ENCODE measurements at regions of chr1 and their contacts with region 1.

Region 1: GRCh38 chr1:47192458-47193384 is 2.9 kb upstream of the PDZK1IP1 start:
- DNase-seq: no peak
- H3K4me3 ChIP-seq: no peak overlapping the region
- CTCF ChIP-seq: peak; percentile 90

Region 2: DNA sequence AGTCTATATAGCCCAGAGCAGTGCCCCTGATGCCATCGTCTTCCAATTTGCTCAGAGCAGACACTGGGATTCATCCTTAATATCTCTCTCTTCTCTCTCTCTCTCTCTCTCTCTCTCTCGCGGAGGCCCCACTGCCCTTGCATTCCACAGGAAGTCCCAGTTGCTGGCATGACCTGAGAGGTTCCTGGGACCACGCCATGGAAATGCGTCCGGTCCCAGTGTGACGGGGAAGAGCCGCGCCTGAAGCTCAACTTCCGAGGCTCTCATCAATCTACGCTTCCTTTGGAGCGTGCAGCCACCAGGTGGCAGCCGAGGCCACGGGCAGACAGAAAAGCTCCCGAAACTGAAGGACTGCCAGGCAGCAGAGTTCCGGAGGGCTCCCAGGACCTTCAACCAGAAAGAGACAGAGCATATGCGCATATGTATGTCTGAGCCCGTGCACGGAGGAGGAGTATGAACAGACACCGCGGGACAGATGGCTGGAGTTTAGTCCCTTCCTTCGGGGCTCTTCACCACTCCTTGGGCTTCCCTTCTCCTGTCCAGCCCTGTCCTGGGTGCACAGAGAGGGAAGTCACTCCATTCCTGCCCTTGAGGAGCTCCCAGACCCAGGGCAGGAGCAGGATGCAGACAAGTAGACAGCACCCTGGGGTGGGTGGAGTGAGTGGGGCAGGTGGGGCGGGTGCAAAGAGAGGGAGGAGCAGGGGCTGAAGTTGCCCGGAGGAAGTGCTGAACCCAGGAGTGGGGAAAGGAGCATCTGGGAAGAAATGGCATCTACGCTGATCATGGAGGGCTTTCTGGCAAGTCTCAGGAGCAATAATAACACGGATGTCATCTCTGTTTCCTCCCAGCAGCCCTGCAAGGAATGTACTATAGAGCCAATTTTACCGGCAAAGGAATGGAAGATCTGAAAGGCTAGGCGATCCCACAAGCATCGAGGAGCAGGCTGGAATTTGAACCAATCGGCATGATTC is 13.4 kb before region 1 on chr1:
- CTCF ChIA-PET with region 1: interaction called, 213 read pairs
- POLR2A ChIA-PET with region 1: no interaction called
- DNase-seq: peak; percentile 72
- H3K4me3 ChIP-seq: peak overlapping the region; percentile 60
- CTCF ChIP-seq: peak; percentile 97

Region 3: DNA sequence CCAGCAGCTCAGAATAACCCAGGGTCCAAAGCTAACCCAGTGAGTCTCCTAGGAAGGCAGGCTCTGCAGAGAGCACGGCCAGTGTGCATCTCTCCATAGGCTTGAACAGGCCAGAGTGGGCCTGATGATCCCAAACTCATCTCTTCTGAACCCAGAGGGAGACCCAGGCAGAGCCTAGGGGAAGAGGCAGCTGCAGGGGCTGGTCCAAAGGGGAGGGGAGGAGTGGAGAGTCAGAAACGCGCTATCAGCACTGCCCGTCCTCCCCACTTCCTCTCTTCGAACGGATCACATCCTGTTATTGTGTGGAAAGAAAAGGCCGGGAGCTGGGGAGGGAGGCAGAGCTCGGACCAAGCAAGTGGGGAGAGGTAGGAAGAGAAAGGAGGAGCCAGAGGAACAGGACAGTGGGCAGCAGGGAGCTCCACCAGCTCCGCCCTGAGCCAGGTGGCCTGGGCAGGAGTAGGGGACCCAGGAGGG is 19.1 kb after region 1 on chr1:
- CTCF ChIA-PET with region 1: interaction called, 46 read pairs
- POLR2A ChIA-PET with region 1: no interaction called
- DNase-seq: no peak
- H3K4me3 ChIP-seq: no peak overlapping the region
- CTCF ChIP-seq: no peak

Region 4: DNA sequence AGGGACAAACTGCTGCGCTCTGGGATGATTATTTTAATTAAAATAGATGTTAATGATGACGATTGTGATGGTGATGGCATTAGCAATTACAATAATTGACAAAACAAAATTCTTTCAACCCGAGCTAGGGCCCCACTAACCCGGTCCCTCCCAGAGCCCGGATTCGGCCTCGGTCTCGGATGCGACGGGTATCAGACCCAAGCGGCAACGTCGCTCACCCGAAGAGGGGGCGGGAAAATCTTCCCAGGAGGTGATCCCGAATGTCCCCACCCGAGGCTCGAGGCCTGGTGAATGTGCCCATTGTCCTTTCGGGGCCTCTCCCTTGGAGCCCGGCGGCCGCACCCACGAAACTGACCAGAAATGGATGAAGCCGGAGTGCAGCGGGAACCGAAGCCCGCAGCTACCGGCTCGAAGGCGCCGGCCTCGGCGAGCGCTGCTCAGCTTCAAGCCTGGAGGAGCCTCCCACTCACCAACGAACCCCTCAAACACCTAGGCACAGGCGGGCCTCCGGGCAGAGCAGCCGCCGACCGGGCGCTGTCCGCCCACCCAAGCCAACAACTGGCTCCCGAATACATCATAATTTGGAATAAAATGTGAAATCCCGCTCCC is 38.1 kb after region 1 on chr1:
- CTCF ChIA-PET with region 1: interaction called, 21 read pairs
- POLR2A ChIA-PET with region 1: no interaction called
- DNase-seq: no peak
- H3K4me3 ChIP-seq: no peak overlapping the region
- CTCF ChIP-seq: no peak

Region 5: DNA sequence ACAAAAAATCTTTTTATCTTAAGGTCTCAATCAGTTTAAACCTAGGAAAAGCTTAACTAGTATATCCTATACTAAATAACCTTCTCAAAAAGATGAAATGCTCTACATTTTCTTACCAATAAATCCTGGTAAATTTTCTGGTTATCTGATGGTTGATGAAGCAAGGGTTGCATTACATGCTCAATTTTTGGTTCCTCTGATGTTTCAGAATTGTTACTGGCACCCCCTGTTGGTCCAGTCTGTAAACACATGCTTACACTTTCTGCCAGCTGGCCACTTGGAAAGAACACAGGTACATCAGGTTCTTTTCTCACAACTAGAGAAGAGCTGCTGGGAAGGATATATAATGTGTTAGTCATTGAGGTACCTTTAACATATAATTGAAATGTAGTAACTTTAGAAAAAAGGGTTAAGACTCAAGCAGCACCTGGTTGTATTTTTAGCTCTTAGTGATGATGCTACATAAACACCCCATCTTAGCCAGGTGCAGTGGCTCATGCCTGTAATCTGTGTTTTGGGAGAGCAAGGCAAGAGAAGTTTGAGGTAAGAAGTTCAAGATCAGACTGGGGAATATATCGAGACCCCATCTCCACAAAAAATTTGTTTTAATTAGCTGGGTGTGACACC is 70.2 kb after region 1 on chr1:
- CTCF ChIA-PET with region 1: interaction called, 120 read pairs
- POLR2A ChIA-PET with region 1: no interaction called
- DNase-seq: no peak
- H3K4me3 ChIP-seq: no peak overlapping the region
- CTCF ChIP-seq: peak; percentile 58

Region 6: GRCh38 chr1:47340227-47340626 is 147.5 kb after region 1 on chr1:
- CTCF ChIA-PET with region 1: interaction called, 10 read pairs
- POLR2A ChIA-PET with region 1: no interaction called
- DNase-seq: no peak
- H3K4me3 ChIP-seq: no peak overlapping the region
- CTCF ChIP-seq: no peak

Region 7: GRCh38 chr1:47725992-47726855 is 533.5 kb after region 1 on chr1:
- CTCF ChIA-PET with region 1: interaction called, 26 read pairs
- POLR2A ChIA-PET with region 1: no interaction called
- DNase-seq: no peak
- H3K4me3 ChIP-seq: no peak overlapping the region
- CTCF ChIP-seq: peak; percentile 93

Measured in AG04449 (cell line).